ENCODE measurements at regions of chr7 and their contacts with region 1.

Region 1: DNA sequence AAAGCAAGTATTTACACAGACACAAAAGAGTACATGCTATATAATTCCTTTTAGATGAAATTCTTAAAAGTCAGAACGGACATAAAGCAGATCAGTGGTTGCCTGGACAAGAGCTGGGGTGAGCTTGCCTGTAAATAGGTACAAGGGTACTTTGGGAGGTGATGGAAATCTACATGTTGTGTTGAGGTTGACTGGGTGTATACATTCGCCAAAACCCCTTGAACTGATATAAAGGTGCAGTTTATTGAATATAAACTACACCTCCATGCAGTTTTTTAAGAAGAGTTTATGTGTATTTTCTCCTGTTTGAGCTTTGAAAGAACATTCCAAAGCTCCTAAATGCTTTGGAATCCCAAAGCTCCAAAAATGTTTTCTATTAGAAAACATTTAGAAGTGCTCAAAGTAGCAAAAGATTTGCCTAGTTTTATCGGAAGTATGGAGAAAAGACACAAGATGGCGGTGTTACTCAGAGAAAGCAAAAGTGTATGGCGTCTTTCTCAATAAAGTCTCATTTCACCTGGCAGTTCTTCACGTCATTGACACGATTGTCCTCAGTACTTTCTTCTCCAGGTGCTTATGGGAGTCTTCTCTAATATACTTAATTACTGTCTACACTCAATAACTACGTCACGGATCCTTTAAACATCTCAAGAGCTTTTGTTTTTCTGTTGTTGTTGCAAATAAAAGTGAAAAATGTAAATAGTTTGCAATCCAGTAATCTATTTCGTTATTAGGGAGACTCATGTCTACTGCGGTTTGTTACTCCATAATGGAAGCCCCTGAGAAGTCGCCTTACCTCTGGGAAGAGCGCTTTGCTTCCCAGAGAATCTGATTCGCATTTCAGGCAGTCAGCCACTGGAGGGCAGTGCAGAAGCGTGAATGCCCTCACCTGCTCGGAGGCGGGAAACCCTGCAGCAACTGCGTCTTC is 14.7 kb upstream of the SEC61G start:
- DNase-seq: peak; percentile 80
- H3K4me3 ChIP-seq: peak overlapping the region; percentile 53 to 57
- H3K27ac ChIP-seq: peak overlapping the region; percentile 41 to 49; a peak in 2 of 4 replicates
- H3K4me1 ChIP-seq: 0 out of 4 replicates have a peak, but pooled peaks cover 0 to 6% of the 10 kb centered on the region in 2 experiments
- H3K27me3 ChIP-seq: no peaks in the 10 kb centered on the region
- CTCF ChIP-seq: peak; percentile 99
- EP300 ChIP-seq: no peak
- RAD21 ChIP-seq: peak; percentile 99

Region 2: GRCh38 chr7:53900856-53901528 is 872.7 kb before region 1 on chr7:
- CTCF ChIA-PET with region 1: no interaction called
- POLR2A ChIA-PET with region 1: no interaction called
- DNase-seq: peak; percentile 11
- H3K4me3 ChIP-seq: no peak overlapping the region
- H3K27ac ChIP-seq: no peak overlapping the region
- H3K4me1 ChIP-seq: no peaks in the 10 kb centered on the region; a peak in 1 of 4 replicates
- H3K27me3 ChIP-seq: no peaks in the 10 kb centered on the region
- CTCF ChIP-seq: no peak
- EP300 ChIP-seq: no peak
- RAD21 ChIP-seq: peak; percentile 29; the same call in 1 of the 2 replicates

Region 3: DNA sequence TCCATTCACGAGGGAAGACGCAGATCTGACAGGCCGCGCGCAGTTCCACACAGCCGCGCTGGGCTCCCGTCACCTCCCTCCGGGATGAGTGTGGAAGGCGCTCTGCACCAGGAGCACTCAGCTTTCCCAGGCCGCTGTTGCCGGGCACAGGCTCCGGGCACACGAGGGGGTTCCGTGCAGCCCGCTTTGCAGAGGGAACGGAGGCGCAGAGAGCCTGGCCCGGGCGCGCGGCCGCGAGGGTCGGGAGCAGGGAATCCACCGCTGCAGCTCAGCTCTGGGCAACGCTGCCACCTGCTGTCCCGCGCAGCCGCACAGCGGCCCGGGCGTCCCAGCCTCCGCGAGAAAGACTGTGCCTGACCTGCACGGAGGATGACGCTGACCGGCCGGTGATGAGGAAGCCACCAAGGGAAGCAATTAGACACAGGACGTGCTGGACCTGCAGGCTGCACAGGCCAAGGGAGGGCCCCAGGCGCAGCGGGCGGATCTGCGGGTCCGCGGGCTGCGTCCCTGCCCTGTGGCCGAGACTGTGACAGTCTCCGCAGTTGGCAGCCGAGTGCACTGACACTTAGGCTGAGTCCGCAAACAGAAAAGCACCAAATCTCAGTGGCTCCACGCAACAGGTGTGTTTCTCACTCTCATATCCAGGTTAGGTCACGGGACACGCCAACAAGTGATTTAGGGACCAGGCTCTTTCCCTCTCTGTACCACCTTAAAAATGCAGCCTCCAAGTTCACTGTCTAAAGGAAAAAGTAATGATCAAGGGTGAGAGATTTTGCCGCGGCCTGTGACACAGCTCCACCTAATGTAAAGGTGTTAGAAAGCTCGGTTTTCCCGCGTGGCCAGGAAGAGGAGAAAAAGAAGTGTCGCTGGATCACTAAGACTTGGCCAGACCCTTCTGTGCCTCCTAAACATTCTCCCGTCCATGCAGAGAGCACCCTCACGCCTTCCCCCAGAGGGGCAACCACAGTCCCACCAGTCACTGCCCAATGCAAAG is 109.2 kb before region 1 on chr7:
- CTCF ChIA-PET with region 1: no interaction called
- POLR2A ChIA-PET with region 1: no interaction called
- DNase-seq: peak; percentile 97
- H3K4me3 ChIP-seq: peak overlapping the region; percentile 53 to 58
- H3K27ac ChIP-seq: no peak overlapping the region; a peak in 1 of 4 replicates
- H3K4me1 ChIP-seq: peaks cover 0 to 11% of the 10 kb centered on the region in 2 experiments; a peak in 1 of 4 replicates
- H3K27me3 ChIP-seq: peaks cover 24% of the 10 kb centered on the region
- CTCF ChIP-seq: peak; percentile 46
- EP300 ChIP-seq: no peak
- RAD21 ChIP-seq: peak; percentile 87

Region 4: GRCh38 chr7:54705436-54705835 is 68.3 kb before region 1 on chr7:
- CTCF ChIA-PET with region 1: no interaction called
- POLR2A ChIA-PET with region 1: no interaction called
- DNase-seq: no peak
- H3K4me3 ChIP-seq: no peak overlapping the region
- H3K27ac ChIP-seq: no peak overlapping the region
- H3K4me1 ChIP-seq: no peaks in the 10 kb centered on the region
- H3K27me3 ChIP-seq: no peaks in the 10 kb centered on the region
- CTCF ChIP-seq: no peak
- EP300 ChIP-seq: no peak
- RAD21 ChIP-seq: no peak

Region 5: GRCh38 chr7:54729107-54729506 is 44.6 kb before region 1 on chr7:
- CTCF ChIA-PET with region 1: no interaction called
- POLR2A ChIA-PET with region 1: no interaction called
- DNase-seq: no peak
- H3K4me3 ChIP-seq: no peak overlapping the region
- H3K27ac ChIP-seq: no peak overlapping the region
- H3K4me1 ChIP-seq: no peaks in the 10 kb centered on the region
- H3K27me3 ChIP-seq: no peaks in the 10 kb centered on the region
- CTCF ChIP-seq: no peak
- EP300 ChIP-seq: no peak
- RAD21 ChIP-seq: no peak

Region 6: DNA sequence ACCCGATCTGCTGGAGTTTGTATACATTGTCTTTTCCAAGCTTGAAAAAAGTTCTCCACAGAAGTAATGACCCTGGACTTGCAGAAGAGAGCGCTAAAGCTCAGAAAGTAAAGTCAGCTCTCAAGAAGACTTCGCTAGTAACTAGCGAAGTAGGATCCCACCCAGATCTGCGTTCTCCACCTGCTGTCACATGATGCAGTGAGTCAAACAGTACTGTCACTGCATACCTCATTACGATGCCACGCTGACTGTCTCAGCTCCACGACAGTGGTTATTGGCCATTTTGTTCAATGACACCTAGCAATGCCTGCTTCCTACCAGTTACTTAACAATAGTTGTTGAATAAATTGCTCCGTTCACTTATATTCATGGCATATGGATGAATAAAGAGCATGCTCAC is 14.9 kb after region 1 on chr7:
- CTCF ChIA-PET with region 1: interaction called, 114 read pairs
- POLR2A ChIA-PET with region 1: no interaction called
- DNase-seq: peak; percentile 73
- H3K4me3 ChIP-seq: no peak overlapping the region
- H3K27ac ChIP-seq: 0 out of 4 replicates have a peak overlapping the region, but pooled peaks of 1 of the 2 experiments have one; percentile 6
- H3K4me1 ChIP-seq: peaks cover 0 to 4% of the 10 kb centered on the region in 2 experiments; a peak in 1 of 4 replicates
- H3K27me3 ChIP-seq: no peaks in the 10 kb centered on the region
- CTCF ChIP-seq: peak; percentile 96
- EP300 ChIP-seq: no peak
- RAD21 ChIP-seq: peak; percentile 97

Region 7: GRCh38 chr7:54978364-54979118 is 204.8 kb after region 1 on chr7:
- CTCF ChIA-PET with region 1: interaction called, 12 read pairs
- POLR2A ChIA-PET with region 1: no interaction called
- DNase-seq: no peak
- H3K4me3 ChIP-seq: no peak overlapping the region
- H3K27ac ChIP-seq: no peak overlapping the region
- H3K4me1 ChIP-seq: no peaks in the 10 kb centered on the region; a peak in 1 of 4 replicates
- H3K27me3 ChIP-seq: no peaks in the 10 kb centered on the region
- CTCF ChIP-seq: no peak
- EP300 ChIP-seq: no peak
- RAD21 ChIP-seq: no peak

Region 8: GRCh38 chr7:55212838-55213539 is 439.3 kb after region 1 on chr7:
- CTCF ChIA-PET with region 1: interaction called, 16 read pairs
- POLR2A ChIA-PET with region 1: no interaction called
- DNase-seq: peak; percentile 74
- H3K4me3 ChIP-seq: no peak overlapping the region
- H3K27ac ChIP-seq: peak overlapping the region in 1 of 2 experiments; percentile 64; a peak in 2 of 4 replicates
- H3K4me1 ChIP-seq: peaks cover 7 to 32% of the 10 kb centered on the region in 2 experiments; a peak in 3 of 4 replicates
- H3K27me3 ChIP-seq: no peaks in the 10 kb centered on the region
- CTCF ChIP-seq: no peak
- EP300 ChIP-seq: peak in 1 of 2 experiments; percentile 77; a peak in 1 of 4 replicates
- RAD21 ChIP-seq: peak; percentile 31; the same call in 1 of the 2 replicates

Region 9: GRCh38 chr7:55280031-55280454 is 506.3 kb after region 1 on chr7:
- CTCF ChIA-PET with region 1: interaction called, 22 read pairs
- POLR2A ChIA-PET with region 1: no interaction called
- DNase-seq: peak; percentile 81
- H3K4me3 ChIP-seq: no peak overlapping the region
- H3K27ac ChIP-seq: no peak overlapping the region
- H3K4me1 ChIP-seq: no peaks in the 10 kb centered on the region
- H3K27me3 ChIP-seq: no peaks in the 10 kb centered on the region
- CTCF ChIP-seq: peak; percentile 95
- EP300 ChIP-seq: no peak
- RAD21 ChIP-seq: peak; percentile 98

Region 10: GRCh38 chr7:55409482-55410225 is 635.9 kb after region 1 on chr7:
- CTCF ChIA-PET with region 1: interaction called, 20 read pairs
- POLR2A ChIA-PET with region 1: no interaction called
- DNase-seq: peak; percentile 54
- H3K4me3 ChIP-seq: no peak overlapping the region
- H3K27ac ChIP-seq: no peak overlapping the region
- H3K4me1 ChIP-seq: peaks cover 0 to 5% of the 10 kb centered on the region in 2 experiments; a peak in 1 of 4 replicates
- H3K27me3 ChIP-seq: no peaks in the 10 kb centered on the region
- CTCF ChIP-seq: peak; percentile 16; the same call in 1 of the 2 replicates
- EP300 ChIP-seq: no peak
- RAD21 ChIP-seq: no peak

Measured in SK-N-SH (cell line).